Activated B cell treated with CpG ODN at 0.5 μM for 24 hours (primary cell): ENCODE measurements at regions of chr2 and their contacts with region 1.

Region 1: DNA sequence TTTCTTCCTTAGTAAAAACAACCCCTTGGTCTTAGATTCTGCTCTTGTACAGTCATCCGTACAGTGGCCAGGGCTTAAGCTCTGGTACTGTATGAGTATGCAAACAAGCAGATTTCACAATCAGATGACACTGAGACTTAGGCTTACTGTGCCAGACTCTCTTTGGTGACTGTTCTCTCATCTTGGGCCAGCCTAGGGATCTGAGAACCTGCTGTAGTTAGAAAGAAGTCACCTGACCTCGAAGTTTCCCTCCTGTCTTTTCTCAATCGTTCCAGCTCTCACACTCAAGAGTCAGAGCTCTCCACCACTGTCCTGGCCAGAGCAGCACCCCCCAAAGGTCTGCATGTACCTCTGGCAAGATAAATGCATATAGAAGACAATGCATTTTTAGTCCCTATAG is 63.2 kb downstream of the ZEB2 start:
- DNase-seq: no peak
- ATAC-seq: peak; percentile 90
- H3K4me3 Mint-ChIP-seq: peak overlapping the region; percentile 25
- H3K27ac Mint-ChIP-seq: peak overlapping the region; percentile 83
- H3K4me1 Mint-ChIP-seq: peaks cover 96% of the 10 kb centered on the region
- H3K27me3 Mint-ChIP-seq: no peaks in the 10 kb centered on the region
- CTCF ChIP-seq: no peak

Region 2: GRCh38 chr2:144183727-144184126 is 273.0 kb before region 1 on chr2:
- CTCF ChIA-PET with region 1: no interaction called
- POLR2A ChIA-PET with region 1: no interaction called
- intact Hi-C with region 1: loop called (anchors 5 kb)
- DNase-seq: peak; percentile 35
- ATAC-seq: peak; percentile 96
- H3K4me3 Mint-ChIP-seq: peak overlapping the region; percentile 82
- H3K27ac Mint-ChIP-seq: peak overlapping the region; percentile 85
- H3K4me1 Mint-ChIP-seq: peaks cover 28% of the 10 kb centered on the region
- H3K27me3 Mint-ChIP-seq: no peaks in the 10 kb centered on the region
- CTCF ChIP-seq: no peak

Region 3: GRCh38 chr2:144471305-144472045 is 14.8 kb after region 1 on chr2:
- CTCF ChIA-PET with region 1: no interaction called
- POLR2A ChIA-PET with region 1: interaction called, 5 read pairs
- intact Hi-C with region 1: loop called (anchors 1 kb)
- DNase-seq: no peak
- ATAC-seq: peak; percentile 89
- H3K4me3 Mint-ChIP-seq: peak overlapping the region; percentile 52
- H3K27ac Mint-ChIP-seq: no peak overlapping the region
- H3K4me1 Mint-ChIP-seq: peaks cover 30% of the 10 kb centered on the region
- H3K27me3 Mint-ChIP-seq: no peaks in the 10 kb centered on the region
- CTCF ChIP-seq: no peak